Heart left ventricle (tissue), 16 donors: ENCODE measurements at regions of chr1 and their contacts with region 1.

Region 1: GRCh38 chr1:197521118-197521739 is 253.2 kb downstream of the CRB1 start:
- DNase-seq: no peak
- ATAC-seq: no peak
- H3K4me3 ChIP-seq: no peak overlapping the region
- H3K27ac ChIP-seq: no peak overlapping the region
- H3K4me1 ChIP-seq: peaks cover 0 to 3% (median 0%) of the 10 kb centered on the region in 12 donors
- H3K27me3 ChIP-seq: no peaks in the 10 kb centered on the region
- CTCF ChIP-seq: peak; percentile 20 to 65 (median 48)
- POLR2A ChIP-seq: no peak

Region 2: GRCh38 chr1:197180252-197180878 is 340.9 kb before region 1 on chr1:
- intact Hi-C with region 1: loop called in 1 of 10 experiments (anchors 10 kb)
- DNase-seq: no peak
- ATAC-seq: peak in 2 of 4 donors; percentile 60 to 62
- H3K4me3 ChIP-seq: no peak overlapping the region
- H3K27ac ChIP-seq: no peak overlapping the region
- H3K4me1 ChIP-seq: peaks cover 0 to 10% (median 0%) of the 10 kb centered on the region in 12 donors
- H3K27me3 ChIP-seq: no peaks in the 10 kb centered on the region
- CTCF ChIP-seq: peak; percentile 48 to 75 (median 64)
- POLR2A ChIP-seq: no peak

Region 3: DNA sequence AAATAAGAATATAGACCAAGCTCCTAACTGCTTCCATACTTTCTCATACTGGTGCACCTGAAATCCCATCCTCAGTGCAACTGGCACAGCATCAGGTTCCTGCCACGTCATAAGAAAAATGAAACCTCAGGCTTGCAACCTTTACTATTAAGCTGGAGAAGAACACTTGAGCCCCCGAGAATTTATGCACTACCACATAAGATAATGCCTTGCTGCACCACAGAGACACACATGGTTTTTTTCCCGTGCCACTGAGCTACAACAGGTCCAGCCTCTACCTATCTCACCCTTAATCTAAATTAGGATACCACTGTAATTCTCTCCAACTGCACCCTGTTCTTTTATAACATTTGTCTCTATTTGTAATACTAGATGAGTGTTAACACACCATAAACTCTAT is 79.5 kb after region 1 on chr1:
- intact Hi-C with region 1: loop called in 1 of 10 experiments (anchors 5 kb)
- DNase-seq: no peak
- ATAC-seq: no peak
- H3K4me3 ChIP-seq: no peak overlapping the region
- H3K27ac ChIP-seq: no peak overlapping the region
- H3K4me1 ChIP-seq: no peaks in the 10 kb centered on the region
- H3K27me3 ChIP-seq: no peaks in the 10 kb centered on the region
- CTCF ChIP-seq: no peak
- POLR2A ChIP-seq: no peak

Region 4: GRCh38 chr1:197675583-197676208 is 154.5 kb after region 1 on chr1:
- intact Hi-C with region 1: no loop called
- DNase-seq: peak in 4 of 5 donors; percentile 7 to 27 (median 22)
- ATAC-seq: peak in 3 of 4 donors; percentile 56 to 76 (median 64)
- H3K4me3 ChIP-seq: peak overlapping the region in 9 of 12 donors; percentile 4 to 43 (median 25)
- H3K27ac ChIP-seq: no peak overlapping the region
- H3K4me1 ChIP-seq: peaks cover 0 to 20% (median 0%) of the 10 kb centered on the region in 12 donors
- H3K27me3 ChIP-seq: no peaks in the 10 kb centered on the region
- CTCF ChIP-seq: no peak
- POLR2A ChIP-seq: no peak

Region 5: DNA sequence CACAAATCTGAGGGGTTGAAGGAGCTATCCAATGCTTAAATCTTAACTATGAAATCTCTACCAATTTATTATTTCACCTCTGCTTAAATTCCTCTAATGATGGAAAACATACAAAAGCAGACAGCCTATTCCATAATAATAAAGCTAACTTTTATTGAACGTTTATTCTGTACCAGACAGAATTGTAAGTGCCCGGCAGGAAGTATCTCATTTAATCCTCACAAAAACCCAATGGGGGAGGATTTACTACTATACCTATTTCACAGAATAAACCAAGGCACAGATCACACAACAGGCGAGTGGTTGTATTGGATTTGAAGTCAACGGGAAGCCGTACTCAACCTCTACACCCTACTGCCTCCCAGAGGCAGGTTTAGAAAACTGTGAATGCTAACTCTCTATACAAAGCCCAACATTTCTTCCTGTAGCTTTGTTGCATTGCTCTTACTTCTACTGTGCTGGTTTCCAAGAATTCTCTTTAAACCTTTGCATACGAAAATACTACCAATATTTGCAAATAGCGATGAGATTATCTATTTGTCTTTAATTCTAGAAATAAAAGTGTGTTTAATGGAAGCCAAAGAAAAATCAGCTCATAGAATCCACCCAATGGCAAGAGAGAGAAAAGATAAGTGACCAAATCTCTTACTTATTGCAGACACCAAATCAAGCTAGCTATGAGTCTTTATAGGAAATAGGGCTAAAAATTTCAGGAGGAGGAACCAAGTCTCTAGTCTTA is 347.7 kb after region 1 on chr1:
- intact Hi-C with region 1: loop called in 6 of 10 experiments (anchors 5 to 10 kb)
- DNase-seq: peak in 1 of 5 donors; percentile 13
- ATAC-seq: peak; percentile 51 to 89 (median 86)
- H3K4me3 ChIP-seq: no peak overlapping the region
- H3K27ac ChIP-seq: no peak overlapping the region
- H3K4me1 ChIP-seq: no peaks in the 10 kb centered on the region
- H3K27me3 ChIP-seq: no peaks in the 10 kb centered on the region
- CTCF ChIP-seq: peak; percentile 41 to 73 (median 61)
- POLR2A ChIP-seq: no peak

Region 6: DNA sequence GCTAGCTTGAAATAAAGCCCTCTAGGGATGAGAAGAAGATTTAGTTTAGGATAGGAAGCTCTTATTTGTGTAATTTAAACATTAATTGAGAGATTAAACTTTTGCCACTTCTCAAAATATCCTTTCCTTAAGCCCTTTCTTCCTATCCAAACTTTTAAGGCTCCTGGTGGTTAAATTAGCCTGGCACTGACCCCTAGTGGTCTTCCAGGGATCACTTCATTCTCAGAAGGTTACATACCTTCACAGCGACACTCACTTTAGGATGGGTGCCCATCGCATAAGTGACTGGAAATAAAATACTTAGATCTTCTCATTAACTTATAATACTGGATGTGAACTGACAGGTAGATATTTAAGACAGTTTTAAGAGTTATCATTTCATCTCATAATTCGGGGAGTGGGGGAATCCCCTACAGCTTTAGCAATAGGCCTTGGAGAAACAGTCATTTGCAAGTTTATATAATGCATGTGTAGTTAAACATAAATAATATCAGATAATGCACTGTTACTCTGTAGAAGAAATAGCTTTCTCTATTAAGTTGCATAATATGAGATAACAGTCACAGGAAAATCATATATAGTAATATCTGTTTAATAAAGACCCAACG is 403.4 kb after region 1 on chr1:
- intact Hi-C with region 1: loop called in 9 of 10 experiments (anchors 5 to 10 kb)
- DNase-seq: no peak
- ATAC-seq: peak in 3 of 4 donors; percentile 61 to 73 (median 66)
- H3K4me3 ChIP-seq: no peak overlapping the region
- H3K27ac ChIP-seq: no peak overlapping the region
- H3K4me1 ChIP-seq: peaks cover 0 to 8% (median under 1%) of the 10 kb centered on the region in 12 donors
- H3K27me3 ChIP-seq: peaks cover 17 to 84% (median 47%) of the 10 kb centered on the region in 9 donors
- CTCF ChIP-seq: peak; percentile 52 to 77 (median 66)
- POLR2A ChIP-seq: no peak